HCT116 (cell line): ENCODE measurements at regions of chr2 and their contacts with region 1.

Region 1: GRCh38 chr2:100818606-100819369 is 1.2 kb upstream of the NPAS2 start:
- DNase-seq: peak; percentile 10
- ATAC-seq: peak; percentile 58
- H3K4me3 ChIP-seq: peak overlapping the region; percentile 60 to 67
- H3K27ac ChIP-seq: peak overlapping the region; percentile 58
- H3K4me1 ChIP-seq: peaks cover 3 to 41% of the 10 kb centered on the region in 2 experiments; a peak in 3 of 4 replicates
- H3K27me3 ChIP-seq: no peaks in the 10 kb centered on the region
- CTCF ChIP-seq: peak; percentile 38 to 46 (median 46); a peak in 4 of 6 replicates
- POLR2A ChIP-seq: no peak
- RAD21 ChIP-seq: no peak

Region 2: GRCh38 chr2:100902833-100903405 is 84.1 kb after region 1 on chr2:
- CTCF ChIA-PET with region 1: no interaction called
- POLR2A ChIA-PET with region 1: interaction called, 3 read pairs
- RAD21 ChIA-PET with region 1: no interaction called
- intact Hi-C with region 1: loop called (anchors 5 kb)
- DNase-seq: peak; percentile 85
- ATAC-seq: peak; percentile 92
- H3K4me3 ChIP-seq: peak overlapping the region in 1 of 2 experiments; percentile 22; a peak in 2 of 4 replicates
- H3K27ac ChIP-seq: peak overlapping the region; percentile 67
- H3K4me1 ChIP-seq: peaks cover 41 to 47% of the 10 kb centered on the region in 2 experiments
- H3K27me3 ChIP-seq: no peaks in the 10 kb centered on the region
- CTCF ChIP-seq: 0 out of 6 replicates have a peak, but pooled peaks of 1 of the 3 experiments have one; percentile 14
- POLR2A ChIP-seq: no peak
- RAD21 ChIP-seq: peak; percentile 21; the same call in 1 of the 2 replicates

Region 3: DNA sequence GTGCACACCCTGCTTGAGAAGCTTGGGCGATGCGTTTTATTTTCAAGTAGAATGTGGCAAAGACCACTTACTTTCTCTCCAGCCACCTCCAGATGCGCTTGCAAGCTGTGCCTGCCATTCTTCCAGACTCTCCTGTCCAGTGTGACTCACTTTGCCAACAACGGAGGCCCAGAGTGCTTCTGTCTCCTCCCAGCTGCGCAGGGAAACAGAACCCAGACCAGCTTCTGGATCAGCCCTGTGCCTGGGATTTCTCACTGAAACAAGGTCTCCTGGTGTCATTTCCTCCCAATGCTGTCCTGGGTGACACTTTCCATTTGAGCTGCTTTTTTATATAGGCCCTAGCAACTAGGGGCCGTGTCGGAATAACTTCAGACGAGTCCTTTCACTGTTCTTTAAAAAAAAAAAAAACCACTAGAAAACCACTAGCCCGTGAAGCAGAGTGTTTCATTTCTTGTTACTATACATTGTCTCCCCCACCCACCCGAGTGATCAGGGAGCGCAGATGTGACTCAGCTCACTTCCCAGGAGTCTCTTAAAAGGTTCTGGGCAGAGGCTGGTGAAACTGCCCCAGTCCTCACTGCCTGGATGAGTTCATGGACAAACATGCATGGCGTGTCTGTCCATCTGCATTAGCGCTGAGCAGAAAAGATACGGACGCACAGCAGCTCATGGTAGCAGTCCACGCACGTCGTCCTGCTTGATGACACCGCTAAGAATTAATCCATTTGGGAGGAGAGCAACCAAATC is 158.0 kb after region 1 on chr2:
- CTCF ChIA-PET with region 1: no interaction called
- POLR2A ChIA-PET with region 1: no interaction called
- RAD21 ChIA-PET with region 1: no interaction called
- intact Hi-C with region 1: no loop called
- DNase-seq: no peak
- ATAC-seq: no peak
- H3K4me3 ChIP-seq: no peak overlapping the region
- H3K27ac ChIP-seq: no peak overlapping the region
- H3K4me1 ChIP-seq: peaks cover 7 to 9% of the 10 kb centered on the region in 2 experiments
- H3K27me3 ChIP-seq: no peaks in the 10 kb centered on the region
- CTCF ChIP-seq: no peak
- POLR2A ChIP-seq: no peak
- RAD21 ChIP-seq: no peak